ENCODE measurements at regions of chr4 and their contacts with region 1.

Region 1: DNA sequence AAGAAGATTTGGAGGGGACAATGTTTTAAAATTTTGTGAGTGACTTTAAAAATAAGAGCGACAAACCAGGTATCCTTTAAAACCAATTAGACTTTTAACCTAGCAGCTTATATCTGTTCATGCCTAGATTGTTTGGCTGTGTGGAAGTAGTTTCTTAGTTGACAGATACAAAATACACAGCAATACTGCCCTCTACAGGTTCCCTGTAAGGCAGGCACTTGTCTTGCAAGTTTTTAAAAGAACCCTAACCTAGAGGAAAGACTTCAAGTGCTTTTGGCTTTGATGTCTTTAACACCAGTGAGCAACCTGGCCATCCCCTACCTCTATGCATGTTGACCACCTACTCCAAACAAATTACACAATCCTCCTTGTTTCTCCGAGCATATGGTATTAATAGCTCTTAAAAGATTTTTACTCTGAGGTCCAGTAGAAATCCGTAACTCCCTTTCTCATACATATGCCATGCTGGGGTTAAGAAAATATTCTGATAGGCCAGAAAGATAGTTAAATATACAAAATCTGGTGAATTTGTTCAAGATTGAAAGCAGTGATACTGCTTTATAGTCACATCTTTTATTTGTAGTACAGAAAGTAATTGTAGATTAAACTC is 273.0 kb downstream of the ARHGAP24 start:
- DNase-seq: no peak
- ATAC-seq: peak; percentile 93 to 97 (median 93)
- H3K4me3 ChIP-seq: no peak overlapping the region
- H3K27ac ChIP-seq: no peak overlapping the region
- H3K4me1 ChIP-seq: no peaks in the 10 kb centered on the region
- H3K27me3 ChIP-seq: no peaks in the 10 kb centered on the region
- CTCF ChIP-seq: peak; percentile 83 to 91 (median 88)
- POLR2A ChIP-seq: no peak

Region 2: DNA sequence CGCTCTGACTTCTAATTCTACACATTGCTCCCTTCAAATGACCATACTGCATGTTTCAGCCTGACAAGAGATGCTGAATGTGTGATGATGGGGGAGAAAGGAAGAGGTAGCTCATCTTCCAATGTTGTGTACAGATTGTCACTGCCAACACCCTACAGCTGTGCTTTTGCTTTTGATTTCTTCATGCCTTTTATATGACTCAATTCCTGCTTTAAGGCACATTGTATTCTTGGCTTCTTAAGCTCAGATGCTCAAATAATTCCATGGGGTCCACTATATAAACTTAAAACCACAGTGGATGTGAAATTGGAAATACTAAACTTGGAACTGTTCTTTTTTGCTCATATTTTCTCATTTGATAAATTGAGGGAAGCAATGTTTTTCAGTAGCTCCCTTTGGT is 598.3 kb before region 1 on chr4:
- intact Hi-C with region 1: loop called in 1 of 2 experiments (anchors 10 kb)
- DNase-seq: no peak
- ATAC-seq: no peak
- H3K4me3 ChIP-seq: no peak overlapping the region
- H3K27ac ChIP-seq: no peak overlapping the region
- H3K4me1 ChIP-seq: no peaks in the 10 kb centered on the region
- H3K27me3 ChIP-seq: no peaks in the 10 kb centered on the region
- CTCF ChIP-seq: no peak
- POLR2A ChIP-seq: no peak

Region 3: GRCh38 chr4:85522277-85522676 is 225.7 kb before region 1 on chr4:
- intact Hi-C with region 1: no loop called
- DNase-seq: no peak
- ATAC-seq: no peak
- H3K4me3 ChIP-seq: no peak overlapping the region
- H3K27ac ChIP-seq: no peak overlapping the region
- H3K4me1 ChIP-seq: no peaks in the 10 kb centered on the region
- H3K27me3 ChIP-seq: no peaks in the 10 kb centered on the region
- CTCF ChIP-seq: no peak
- POLR2A ChIP-seq: no peak